MCF 10A (cell line): ENCODE measurements at regions of chr5 and their contacts with region 1.

Region 1: GRCh38 chr5:135565725-135566421 is 12.9 kb downstream of the CXCL14 start:
- DNase-seq: peak; percentile 76
- H3K4me3 Mint-ChIP-seq: no peak overlapping the region
- H3K27ac Mint-ChIP-seq: no peak overlapping the region
- H3K4me1 Mint-ChIP-seq: peaks cover 11% of the 10 kb centered on the region
- H3K27me3 Mint-ChIP-seq: peaks cover 16% of the 10 kb centered on the region
- CTCF ChIP-seq: peak; percentile 94

Region 2: GRCh38 chr5:135466178-135467050 is 99.5 kb before region 1 on chr5:
- CTCF ChIA-PET with region 1: interaction called, 2,166 read pairs
- POLR2A ChIA-PET with region 1: interaction called, 4 read pairs
- intact Hi-C with region 1: loop called (anchors 1 kb)
- DNase-seq: peak; percentile 78
- H3K4me3 Mint-ChIP-seq: no peak overlapping the region
- H3K27ac Mint-ChIP-seq: no peak overlapping the region
- H3K4me1 Mint-ChIP-seq: peaks cover 5% of the 10 kb centered on the region
- H3K27me3 Mint-ChIP-seq: peaks cover 12% of the 10 kb centered on the region
- CTCF ChIP-seq: peak; percentile 99

Region 3: DNA sequence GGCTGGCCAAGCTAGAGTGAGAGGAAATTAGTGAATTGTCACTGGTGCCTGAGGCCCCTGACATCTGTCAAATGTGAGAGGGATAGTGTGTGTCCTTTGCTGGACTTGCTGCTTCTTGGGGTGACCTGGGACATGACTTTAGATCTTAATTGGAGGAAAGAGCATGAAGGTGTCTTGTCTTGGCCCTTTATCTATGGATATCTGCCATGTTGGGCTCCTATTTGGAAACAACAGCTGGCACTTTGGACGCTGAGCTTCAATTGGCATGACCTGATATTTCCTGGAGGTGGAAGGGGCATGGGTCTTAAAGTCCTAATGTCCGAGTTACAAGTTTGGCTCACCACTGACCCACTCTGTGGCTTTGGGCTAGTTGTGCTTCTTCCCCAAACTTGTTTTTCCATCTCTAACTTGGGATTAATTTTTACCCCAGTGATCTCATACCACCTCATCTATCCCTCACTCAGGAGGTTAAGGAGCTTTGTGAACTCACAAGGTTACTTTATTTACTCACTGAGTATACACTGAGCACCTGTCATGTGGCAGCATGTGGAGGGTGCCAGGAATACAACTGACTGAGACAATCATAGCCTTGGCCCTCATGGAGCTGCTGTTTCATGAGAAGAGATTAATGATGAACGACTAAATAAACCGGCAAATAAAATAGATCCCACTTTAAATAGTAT is 43.0 kb after region 1 on chr5:
- CTCF ChIA-PET with region 1: interaction called, 27 read pairs
- POLR2A ChIA-PET with region 1: no interaction called
- intact Hi-C with region 1: no loop called
- DNase-seq: no peak
- H3K4me3 Mint-ChIP-seq: no peak overlapping the region
- H3K27ac Mint-ChIP-seq: no peak overlapping the region
- H3K4me1 Mint-ChIP-seq: no peaks in the 10 kb centered on the region
- H3K27me3 Mint-ChIP-seq: peaks cover 47% of the 10 kb centered on the region
- CTCF ChIP-seq: no peak

Region 4: GRCh38 chr5:135678640-135679268 is 112.9 kb after region 1 on chr5:
- CTCF ChIA-PET with region 1: interaction called, 17 read pairs
- POLR2A ChIA-PET with region 1: interaction called, 4 read pairs
- intact Hi-C with region 1: no loop called
- DNase-seq: no peak
- H3K4me3 Mint-ChIP-seq: no peak overlapping the region
- H3K27ac Mint-ChIP-seq: peak overlapping the region; percentile 73
- H3K4me1 Mint-ChIP-seq: peaks cover 9% of the 10 kb centered on the region
- H3K27me3 Mint-ChIP-seq: no peaks in the 10 kb centered on the region
- CTCF ChIP-seq: no peak

Region 5: GRCh38 chr5:135729321-135729786 is 163.5 kb after region 1 on chr5:
- CTCF ChIA-PET with region 1: interaction called, 476 read pairs
- POLR2A ChIA-PET with region 1: interaction called, 19 read pairs
- intact Hi-C with region 1: loop called (anchors 1 kb)
- DNase-seq: peak; percentile 48
- H3K4me3 Mint-ChIP-seq: no peak overlapping the region
- H3K27ac Mint-ChIP-seq: no peak overlapping the region
- H3K4me1 Mint-ChIP-seq: no peaks in the 10 kb centered on the region
- H3K27me3 Mint-ChIP-seq: no peaks in the 10 kb centered on the region
- CTCF ChIP-seq: peak; percentile 53

Region 6: DNA sequence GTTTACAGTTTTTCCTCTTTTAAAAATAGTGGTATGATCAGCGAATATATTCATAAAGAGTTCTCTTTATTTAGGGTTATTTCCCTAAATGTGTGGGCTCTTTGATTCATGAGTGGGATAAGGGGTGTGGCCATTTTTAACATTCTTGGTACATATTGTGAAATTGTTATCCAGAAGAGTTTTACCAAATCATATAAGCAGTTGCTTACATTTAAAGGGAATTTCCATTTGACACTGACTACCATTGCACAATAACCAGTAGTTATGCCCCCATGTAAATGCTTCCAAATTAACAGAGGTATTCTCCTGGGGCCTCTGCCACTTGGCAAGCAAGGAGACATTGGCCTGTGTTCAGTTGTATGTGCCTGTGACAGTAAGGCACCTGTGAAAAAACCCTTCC is 295.8 kb after region 1 on chr5:
- CTCF ChIA-PET with region 1: interaction called, 12 read pairs
- POLR2A ChIA-PET with region 1: no interaction called
- intact Hi-C with region 1: no loop called
- DNase-seq: peak; percentile 55
- H3K4me3 Mint-ChIP-seq: no peak overlapping the region
- H3K27ac Mint-ChIP-seq: no peak overlapping the region
- H3K4me1 Mint-ChIP-seq: peaks cover 18% of the 10 kb centered on the region
- H3K27me3 Mint-ChIP-seq: no peaks in the 10 kb centered on the region
- CTCF ChIP-seq: no peak